Dorsolateral prefrontal cortex (tissue), 120 donors: ENCODE measurements at regions of chr3 and their contacts with region 1.

Region 1: DNA sequence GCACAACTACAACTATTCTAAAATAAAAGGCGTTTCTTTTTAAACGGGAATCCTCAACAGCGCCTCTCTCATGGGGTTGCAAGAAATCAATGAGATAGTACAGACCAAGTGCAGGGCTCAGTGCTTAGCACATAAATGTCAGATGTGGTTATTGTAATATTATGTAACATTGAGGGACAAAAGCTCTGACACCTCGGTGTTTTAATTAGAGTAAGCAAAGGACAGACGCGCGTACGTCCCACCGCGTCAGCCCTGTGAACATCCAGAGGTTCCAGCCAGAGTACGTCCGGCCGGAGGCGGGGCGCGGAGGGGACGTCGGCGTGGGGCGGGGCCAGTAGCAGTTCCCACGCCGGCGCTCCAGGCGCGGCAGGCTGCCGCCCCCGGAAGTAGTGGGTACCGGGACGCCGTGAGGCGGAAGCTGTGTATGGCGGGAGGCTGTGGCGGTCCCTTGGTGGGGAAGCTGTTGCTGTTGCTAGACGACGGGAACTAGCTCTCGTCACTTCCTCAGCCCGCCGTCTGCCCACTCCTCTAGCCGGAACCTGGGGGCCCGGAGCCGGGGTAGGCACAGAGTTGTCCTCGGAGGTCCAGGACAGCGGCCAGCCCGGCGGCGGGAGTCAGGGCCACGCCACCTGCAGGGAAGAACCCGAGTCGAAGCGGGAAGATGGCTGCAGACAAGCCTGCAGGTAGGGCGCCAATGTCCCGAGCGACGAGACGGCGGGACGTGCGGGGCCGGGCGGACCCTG is at the start of gene CNOT10:
- DNase-seq: peak; percentile 92 to 99 (median 96)
- H3K4me3 ChIP-seq: peak within 1 kb of the TSS; percentile 62 to 99 (median 87)
- H3K27ac ChIP-seq: peak within 1 kb of the TSS in 58 of 59 donors; percentile 13 to 93 (median 82)
- H3K27me3 ChIP-seq: no peaks in the 10 kb centered on the region
- CTCF ChIP-seq: peak in 42 of 56 donors; percentile 4 to 66 (median 42)
- total RNA-seq, gene CNOT10: 22.8 to 54.2 (median 35.4) TPM

Region 2: GRCh38 chr3:32184187-32184730 is 500.7 kb before region 1 on chr3:
- intact Hi-C with region 1: loop called in 1 of 2 experiments (anchors 5 kb)
- DNase-seq: no peak
- H3K4me3 ChIP-seq: no peak overlapping the region
- H3K27ac ChIP-seq: no peak overlapping the region
- H3K27me3 ChIP-seq: peaks cover 0 to 11% (median 0%) of the 10 kb centered on the region in 45 donors
- CTCF ChIP-seq: no peak